Kidney (tissue), 22 donors: ENCODE measurements at regions of chrX and their contacts with region 1.

Region 1: DNA sequence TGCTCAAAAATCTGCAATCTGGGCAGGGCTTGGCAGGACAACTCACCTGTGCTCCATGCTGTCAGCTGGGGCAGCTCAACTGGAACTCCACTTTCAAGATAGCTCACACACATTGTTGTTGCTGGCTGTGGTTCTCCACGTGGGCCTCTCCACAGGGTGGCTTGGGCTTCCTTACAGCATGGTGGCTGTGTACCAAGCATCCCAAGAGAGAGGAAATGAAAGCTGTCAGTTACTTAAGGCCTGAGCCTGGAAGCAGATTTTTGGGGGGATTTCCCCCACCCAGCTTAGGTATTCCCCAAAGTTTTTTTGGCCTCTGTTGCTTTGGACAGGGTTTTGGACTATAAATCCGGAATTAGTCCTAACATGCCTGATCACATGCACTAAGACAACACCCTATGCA is 81.0 kb downstream of the BCOR start:
- DNase-seq: no peak
- H3K4me3 ChIP-seq: no peak overlapping the region
- H3K27ac ChIP-seq: no peak overlapping the region
- H3K4me1 ChIP-seq: peaks cover 0 to 9% (median 0%) of the 10 kb centered on the region in 3 donors
- H3K27me3 ChIP-seq: peaks cover 2% of the 10 kb centered on the region
- CTCF ChIP-seq: no peak

Region 2: GRCh38 chrX:40085102-40085551 is 68.4 kb after region 1 on chrX:
- intact Hi-C with region 1: loop called (anchors 5 kb)
- DNase-seq: peak in 2 of 5 donors; percentile 41 to 59
- H3K4me3 ChIP-seq: no peak overlapping the region
- H3K27ac ChIP-seq: peak overlapping the region in 1 of 2 donors; percentile 22
- H3K4me1 ChIP-seq: peaks cover 0 to 40% (median 13%) of the 10 kb centered on the region in 3 donors
- H3K27me3 ChIP-seq: peaks cover 10% of the 10 kb centered on the region
- CTCF ChIP-seq: no peak

Region 3: GRCh38 chrX:40207626-40208025 is 190.9 kb after region 1 on chrX:
- intact Hi-C with region 1: no loop called
- DNase-seq: no peak
- H3K4me3 ChIP-seq: no peak overlapping the region
- H3K27ac ChIP-seq: no peak overlapping the region
- H3K4me1 ChIP-seq: no peaks in the 10 kb centered on the region
- H3K27me3 ChIP-seq: no peaks in the 10 kb centered on the region
- CTCF ChIP-seq: no peak